ENCODE measurements at regions of chrX and their contacts with region 1.

Region 1: DNA sequence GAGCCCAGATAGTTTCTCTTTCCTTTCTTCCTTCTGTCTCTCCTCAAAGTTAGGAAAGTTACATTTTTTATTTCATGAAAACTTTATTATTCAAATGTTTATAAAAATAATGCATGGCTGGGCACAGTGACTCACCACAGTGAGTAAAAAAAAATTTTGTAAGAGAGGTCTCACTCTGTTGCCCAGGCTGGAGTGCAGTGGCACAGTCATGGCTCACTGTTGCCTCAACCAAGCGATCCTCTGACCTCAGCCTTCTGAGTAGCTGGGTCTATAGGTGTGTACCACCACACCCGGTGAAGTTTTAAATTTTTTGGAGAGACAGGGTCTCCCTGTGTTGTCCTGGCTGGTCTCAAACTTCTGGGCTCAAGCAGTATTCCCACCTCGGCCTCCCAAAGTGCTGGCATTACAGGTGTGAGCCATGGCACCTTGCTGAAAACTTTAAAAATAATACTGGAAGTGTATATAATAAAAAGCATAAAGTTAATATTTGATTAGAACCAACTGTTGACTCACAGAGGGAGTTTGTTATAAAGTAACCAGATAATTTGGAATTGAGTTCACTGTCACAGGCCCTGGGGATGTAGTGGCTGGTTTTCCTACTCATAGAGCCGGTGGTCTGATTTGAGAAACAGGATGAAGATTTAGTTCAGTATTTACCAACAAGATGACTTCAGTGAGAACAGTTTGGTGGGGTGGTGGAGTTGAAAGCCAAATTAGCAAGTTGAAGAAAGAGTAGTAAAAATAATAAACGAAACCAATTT is 18.0 kb downstream of the CMC4 start:
- DNase-seq: no peak
- ATAC-seq: no peak
- H3K4me3 ChIP-seq: no peak overlapping the region
- H3K27ac ChIP-seq: no peak overlapping the region
- H3K4me1 ChIP-seq: no peaks in the 10 kb centered on the region
- H3K27me3 ChIP-seq: no peaks in the 10 kb centered on the region
- CTCF ChIP-seq: no peak

Region 2: DNA sequence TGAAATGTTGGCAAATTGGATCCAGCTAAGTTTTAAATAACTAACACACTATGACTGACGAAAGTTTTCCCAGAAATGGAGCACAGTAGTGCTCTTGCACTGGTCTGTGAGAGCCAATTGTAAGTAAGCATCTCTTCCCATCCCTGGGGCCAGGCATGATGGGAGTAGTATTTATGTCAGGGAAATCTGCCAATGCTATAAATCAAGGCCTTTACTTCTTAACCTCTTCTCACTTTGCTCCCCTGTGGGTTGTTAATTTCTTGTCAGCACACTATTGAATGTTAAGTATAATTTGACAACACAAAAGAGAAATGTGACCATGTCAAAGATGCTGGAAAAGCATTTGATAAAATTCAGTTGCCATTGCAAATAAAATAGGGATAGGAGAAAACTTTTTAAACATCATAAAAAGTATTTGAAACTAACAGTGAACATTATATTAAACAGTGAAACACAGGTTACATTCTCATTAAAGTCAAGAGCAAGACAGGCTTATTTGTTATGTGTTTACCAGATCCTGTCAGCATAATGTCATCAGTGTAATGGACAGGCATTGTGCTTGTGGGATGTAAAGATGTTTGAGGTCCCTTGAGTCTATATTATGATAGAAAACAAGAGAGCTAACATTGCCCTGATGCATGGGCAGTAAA is 161.8 kb before region 1 on chrX:
- intact Hi-C with region 1: no loop called
- DNase-seq: no peak
- ATAC-seq: no peak
- H3K4me3 ChIP-seq: no peak overlapping the region
- H3K27ac ChIP-seq: no peak overlapping the region
- H3K4me1 ChIP-seq: no peaks in the 10 kb centered on the region
- H3K27me3 ChIP-seq: no peaks in the 10 kb centered on the region
- CTCF ChIP-seq: no peak

Region 3: GRCh38 chrX:154980330-154981096 is 72.4 kb before region 1 on chrX:
- intact Hi-C with region 1: loop called (anchors 5 kb)
- DNase-seq: peak; percentile 64
- ATAC-seq: peak; percentile 99
- H3K4me3 ChIP-seq: peak overlapping the region; percentile 49
- H3K27ac ChIP-seq: no peak overlapping the region
- H3K4me1 ChIP-seq: no peaks in the 10 kb centered on the region
- H3K27me3 ChIP-seq: no peaks in the 10 kb centered on the region
- CTCF ChIP-seq: peak; percentile 66